Motor neuron (in vitro differentiated cells): ENCODE measurements at regions of chr1 and their contacts with region 1.

Region 1: GRCh38 chr1:20696397-20697329 is 21.1 kb downstream of the KIF17 start:
- ATAC-seq: peak; percentile 92 to 95 (median 94)
- H3K4me3 ChIP-seq: peak overlapping the region; percentile 30 to 42 (median 38)
- H3K27ac ChIP-seq: peak overlapping the region; percentile 76 to 83
- H3K4me1 ChIP-seq: peaks cover 8% of the 10 kb centered on the region in 2 donors

Region 2: GRCh38 chr1:20199403-20199802 is 497.3 kb before region 1 on chr1:
- in situ Hi-C with region 1: no loop called
- ATAC-seq: peak in 5 of 8 experiments; percentile 39 to 66 (median 41)
- H3K4me3 ChIP-seq: no peak overlapping the region
- H3K27ac ChIP-seq: no peak overlapping the region
- H3K4me1 ChIP-seq: peaks cover 0 to 3% of the 10 kb centered on the region in 2 donors

Region 3: DNA sequence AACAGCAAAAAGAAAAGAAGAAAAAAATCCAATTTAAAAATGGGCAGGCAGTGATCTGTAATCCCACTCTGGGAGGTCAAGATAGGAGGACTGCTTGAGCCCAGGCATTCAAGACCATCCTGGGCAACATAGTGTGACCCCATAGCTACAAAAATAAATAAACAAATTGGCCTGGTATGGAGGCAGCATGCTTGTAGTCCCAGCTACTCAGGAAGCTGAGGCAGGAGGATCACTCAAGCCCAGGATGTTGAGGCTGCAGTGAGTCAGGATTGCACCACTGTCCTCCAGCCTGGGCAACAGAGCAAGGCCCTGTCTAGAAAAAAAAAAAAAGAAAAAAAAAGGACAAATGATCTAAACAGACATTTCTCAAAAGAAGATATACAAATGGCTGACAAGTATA is 380.4 kb after region 1 on chr1:
- in situ Hi-C with region 1: no loop called
- ATAC-seq: no peak
- H3K4me3 ChIP-seq: no peak overlapping the region
- H3K27ac ChIP-seq: no peak overlapping the region
- H3K4me1 ChIP-seq: no peaks in the 10 kb centered on the region

Region 4: DNA sequence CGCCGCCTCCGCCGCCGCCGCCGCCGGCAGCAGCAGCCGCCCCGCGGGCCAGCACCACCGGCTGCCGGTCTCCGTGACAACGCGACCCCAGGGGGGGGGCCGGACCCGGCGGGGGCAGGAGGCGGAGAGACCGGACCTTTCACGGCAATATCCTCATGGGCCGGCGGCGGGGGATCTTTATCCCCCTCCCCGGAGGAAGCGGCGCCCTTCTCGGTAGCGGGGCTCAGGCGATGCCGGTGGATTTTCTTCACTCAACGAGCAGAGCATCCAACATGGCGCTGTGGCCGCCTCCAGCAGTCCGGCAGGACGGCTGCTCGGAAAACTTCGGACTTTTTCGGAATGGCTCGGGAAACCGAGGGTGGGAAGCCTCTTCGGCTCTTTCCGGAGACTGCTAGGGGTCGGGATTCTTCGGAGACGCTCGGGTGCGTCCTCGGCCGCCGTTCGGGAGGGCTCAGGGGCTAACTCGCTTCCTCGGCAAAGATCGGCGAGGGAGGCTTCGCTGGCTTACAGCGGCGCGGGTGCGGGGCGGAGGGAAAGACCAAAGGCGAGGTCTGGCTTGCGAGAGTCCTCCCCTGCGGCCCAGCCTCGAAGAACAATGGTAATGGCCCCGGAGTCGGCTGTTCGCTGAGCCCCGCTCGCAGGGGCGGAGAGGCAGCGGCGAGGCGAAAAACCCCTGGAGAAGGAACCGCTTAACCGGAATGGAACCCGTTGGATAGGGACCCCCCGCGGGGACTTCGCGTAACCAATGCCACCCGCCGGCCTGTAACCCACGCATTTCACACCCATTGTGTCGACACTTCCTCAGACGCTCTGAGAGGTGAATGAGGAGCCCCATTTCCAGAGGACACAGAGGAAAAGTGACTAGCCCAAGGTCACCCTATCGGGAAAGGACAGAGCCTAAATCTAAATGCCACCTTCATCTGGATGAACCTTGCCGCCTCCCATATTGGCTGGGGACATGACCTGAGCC is 480.2 kb after region 1 on chr1 and contains the start of gene EIF4G3:
- in situ Hi-C with region 1: loop called in 5 of 9 experiments (anchors 25 kb)
- ATAC-seq: peak; percentile 94 to 98 (median 96)
- H3K4me3 ChIP-seq: peak within 1 kb of the TSS; percentile 57 to 87 (median 68)
- H3K27ac ChIP-seq: peak within 1 kb of the TSS; percentile 89 to 97
- H3K4me1 ChIP-seq: peaks cover 0 to 9% of the 10 kb centered on the region in 2 donors
- total RNA-seq, gene EIF4G3: 57.4 to 114 (median 72.9) TPM

Region 5: DNA sequence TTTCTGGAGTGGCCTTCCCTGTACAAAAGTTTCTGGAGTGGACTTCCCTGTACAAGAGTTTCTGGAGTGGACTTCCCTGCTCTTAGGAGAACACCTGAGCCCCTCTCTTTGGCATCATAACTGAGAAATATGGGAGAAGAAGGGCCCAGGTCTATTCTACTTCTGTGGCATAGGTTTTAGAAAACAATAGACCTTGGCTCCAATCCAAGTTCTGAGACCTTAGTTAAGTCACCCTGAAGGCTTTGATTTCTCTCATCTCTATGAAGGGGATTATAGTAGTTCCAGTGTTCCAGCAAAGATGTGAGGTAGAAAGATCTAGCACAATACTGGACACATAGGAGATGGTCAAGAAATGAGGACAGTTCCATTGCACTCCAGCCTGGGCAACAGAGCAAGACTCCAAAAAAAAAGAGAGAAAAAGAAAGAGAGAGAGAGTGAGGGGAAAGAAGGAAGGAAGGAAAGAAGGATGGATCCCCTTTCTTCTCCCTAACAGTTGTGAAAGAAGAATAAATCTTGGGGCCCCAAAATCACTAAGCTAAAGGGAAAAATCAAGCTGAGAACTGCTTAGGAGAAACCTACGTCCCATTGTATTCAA is 493.3 kb after region 1 on chr1:
- in situ Hi-C with region 1: loop called in 7 of 9 experiments (anchors 10 to 25 kb)
- ATAC-seq: no peak
- H3K4me3 ChIP-seq: no peak overlapping the region
- H3K27ac ChIP-seq: no peak overlapping the region
- H3K4me1 ChIP-seq: no peaks in the 10 kb centered on the region

Region 6: DNA sequence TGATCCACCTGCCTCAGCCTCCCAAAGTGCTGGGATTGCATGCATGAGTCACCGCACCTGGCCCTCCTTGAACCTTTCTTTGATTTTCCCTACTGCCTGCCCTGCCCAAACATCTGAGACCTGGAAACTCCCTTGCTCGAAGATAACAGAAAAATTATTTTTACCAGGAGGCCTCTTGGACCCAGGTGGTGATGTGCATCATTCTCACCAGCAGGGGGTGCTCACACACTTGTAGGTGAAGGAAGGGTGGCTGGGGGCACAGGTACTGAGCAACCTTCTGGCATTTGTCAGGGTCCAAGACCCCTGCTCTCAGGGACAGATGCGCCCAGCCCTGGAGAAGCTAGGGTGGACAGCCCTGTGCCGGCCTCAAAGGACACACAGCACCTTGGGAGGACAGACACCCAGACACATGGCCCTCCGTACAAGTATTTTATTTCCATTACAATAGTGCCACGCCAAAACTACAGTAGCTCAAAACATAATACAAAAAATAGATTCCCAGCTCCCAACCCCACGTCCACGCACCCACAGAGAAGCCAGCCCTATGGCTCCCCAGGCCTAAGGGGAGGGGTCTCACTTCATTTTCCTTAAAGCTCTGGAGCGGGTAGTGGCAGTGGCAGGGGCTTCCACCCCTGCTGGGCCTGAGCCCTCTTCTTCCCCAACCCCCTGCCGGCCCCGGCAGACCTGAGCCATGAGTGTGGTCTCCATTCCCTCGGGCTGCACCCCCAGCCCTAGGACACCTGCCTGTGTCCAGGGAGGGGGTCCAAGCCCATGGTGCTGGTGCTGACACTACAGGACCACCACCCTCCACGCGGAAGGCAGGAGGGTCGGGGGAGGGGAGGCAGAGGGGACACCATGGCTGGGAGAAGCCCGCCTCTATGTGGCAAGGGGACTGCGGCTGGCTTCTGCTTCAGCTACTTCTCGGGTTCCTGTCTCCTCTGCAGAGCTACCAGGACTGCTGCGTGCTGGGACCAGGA is 520.5 kb after region 1 on chr1:
- in situ Hi-C with region 1: loop called in 2 of 9 experiments (anchors 25 kb)
- ATAC-seq: peak; percentile 6 to 57 (median 32)
- H3K4me3 ChIP-seq: no peak overlapping the region
- H3K27ac ChIP-seq: no peak overlapping the region
- H3K4me1 ChIP-seq: no peaks in the 10 kb centered on the region